ENCODE measurements at regions of chr5 and their contacts with region 1.

Region 1: DNA sequence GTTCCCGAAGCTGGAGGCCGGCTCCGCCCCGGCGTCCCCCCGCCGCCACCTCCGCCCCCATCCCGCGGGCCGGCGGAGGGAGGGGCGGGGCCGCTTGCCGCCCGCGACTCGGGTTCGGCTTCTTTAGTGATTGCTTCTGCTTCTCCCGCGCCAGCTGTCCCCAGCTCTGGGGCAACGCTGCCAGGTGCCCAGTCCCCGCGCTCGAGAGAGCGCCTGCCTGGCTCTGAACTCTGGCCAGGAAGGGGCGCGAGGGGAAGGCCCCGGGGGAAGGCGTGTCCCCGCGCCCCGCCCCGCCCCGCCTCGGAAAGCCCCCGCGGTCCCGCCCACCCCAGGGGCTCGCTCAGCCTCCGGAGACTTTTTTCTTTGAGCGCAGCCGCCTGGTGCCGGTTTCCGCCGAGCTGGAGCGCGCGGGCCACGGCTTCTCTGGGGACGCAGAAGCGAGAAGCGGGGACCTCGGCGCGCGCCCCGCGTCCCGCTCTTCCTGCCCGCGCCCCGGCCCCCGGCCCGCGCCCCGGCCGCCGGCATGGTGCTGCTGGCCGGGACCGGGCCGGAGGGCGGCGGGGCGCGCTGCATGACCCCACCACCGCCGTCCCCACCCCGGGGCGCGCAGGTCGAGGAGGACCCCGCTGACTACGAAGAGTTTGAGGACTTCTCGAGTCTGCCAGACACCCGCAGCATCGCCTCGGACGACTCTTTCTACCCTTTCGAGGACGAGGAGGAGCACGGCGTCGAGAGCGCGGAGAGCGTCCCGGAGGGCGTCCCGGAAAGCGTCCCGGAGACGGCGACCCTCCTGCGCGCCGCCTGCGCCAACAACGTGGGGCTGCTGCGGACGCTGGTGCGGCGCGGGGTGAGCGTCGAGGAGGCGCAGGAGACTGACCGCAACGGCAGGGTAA is at the start of gene ANKRD33B:
- DNase-seq: peak; percentile 72 to 73
- ATAC-seq: peak; percentile 67 to 78 (median 74)
- H3K4me3 ChIP-seq: peak within 1 kb of the TSS; percentile 50 to 87 (median 78)
- H3K27ac ChIP-seq: peak within 1 kb of the TSS; percentile 33 to 89 (median 84)
- H3K4me1 ChIP-seq: peaks cover 6 to 52% (median 41%) of the 10 kb centered on the region in 9 donors
- H3K27me3 ChIP-seq: peaks cover 0 to 35% (median 0%) of the 10 kb centered on the region in 7 donors
- CTCF ChIP-seq: no peak
- total RNA-seq, gene ANKRD33B: 1.9 to 33.0 (median 19.8) TPM

Region 2: DNA sequence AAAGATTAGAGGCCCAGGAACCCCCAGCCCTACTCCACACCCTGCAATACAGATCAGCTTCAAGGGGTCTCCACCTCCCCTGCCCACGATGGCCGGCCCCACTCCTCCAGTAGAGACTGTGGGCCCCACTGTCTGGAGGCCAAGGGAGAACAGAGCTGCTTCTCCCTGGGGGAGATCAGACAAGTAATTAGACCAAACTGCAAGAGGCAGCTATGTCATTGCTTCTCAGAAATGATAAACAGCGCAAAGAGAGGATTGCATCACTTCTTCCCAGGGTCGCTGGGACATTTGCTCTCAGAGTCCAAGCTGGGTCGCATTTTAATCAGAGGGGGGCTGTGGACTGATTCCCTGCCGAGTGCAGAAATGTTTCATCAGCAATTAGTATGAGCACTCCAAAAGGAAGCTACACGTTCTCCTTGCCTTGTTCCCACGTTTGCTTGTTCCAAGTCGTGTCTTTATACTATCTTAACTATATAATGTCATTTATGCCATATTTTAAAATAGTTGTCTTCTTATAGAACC is 62.6 kb before region 1 on chr5:
- intact Hi-C with region 1: no loop called
- DNase-seq: no peak
- ATAC-seq: no peak
- H3K4me3 ChIP-seq: no peak overlapping the region
- H3K27ac ChIP-seq: no peak overlapping the region
- H3K4me1 ChIP-seq: peaks cover 0 to 20% (median 16%) of the 10 kb centered on the region in 9 donors
- H3K27me3 ChIP-seq: no peaks in the 10 kb centered on the region
- CTCF ChIP-seq: no peak

Region 3: GRCh38 chr5:10601246-10602030 is 37.2 kb after region 1 on chr5:
- intact Hi-C with region 1: loop called in 2 of 10 experiments (anchors 5 kb)
- DNase-seq: peak; percentile 90 to 92
- ATAC-seq: peak; percentile 87 to 94 (median 92)
- H3K4me3 ChIP-seq: peak overlapping the region in 5 of 10 donors; percentile 0 to 18 (median 16)
- H3K27ac ChIP-seq: peak overlapping the region; percentile 39 to 89 (median 80)
- H3K4me1 ChIP-seq: peaks cover 13 to 44% (median 26%) of the 10 kb centered on the region in 9 donors
- H3K27me3 ChIP-seq: no peaks in the 10 kb centered on the region
- CTCF ChIP-seq: no peak

Region 4: GRCh38 chr5:10627160-10627701 is 63.0 kb after region 1 on chr5:
- intact Hi-C with region 1: loop called in 5 of 10 experiments (anchors 5 to 10 kb)
- DNase-seq: no peak
- ATAC-seq: peak in 5 of 8 donors; percentile 5 to 29 (median 17)
- H3K4me3 ChIP-seq: peak overlapping the region in 9 of 10 donors; percentile 6 to 37 (median 32)
- H3K27ac ChIP-seq: peak overlapping the region in 7 of 10 donors; percentile 3 to 69 (median 36)
- H3K4me1 ChIP-seq: peaks cover 9 to 48% (median 33%) of the 10 kb centered on the region in 9 donors
- H3K27me3 ChIP-seq: peaks cover 0 to 6% (median 0%) of the 10 kb centered on the region in 7 donors
- CTCF ChIP-seq: no peak

Region 5: GRCh38 chr5:12480487-12480886 is 1916.3 kb after region 1 on chr5:
- intact Hi-C with region 1: no loop called
- DNase-seq: no peak
- ATAC-seq: no peak
- H3K4me3 ChIP-seq: no peak overlapping the region
- H3K27ac ChIP-seq: no peak overlapping the region
- H3K4me1 ChIP-seq: no peaks in the 10 kb centered on the region
- H3K27me3 ChIP-seq: no peaks in the 10 kb centered on the region
- CTCF ChIP-seq: no peak

Measured in heart right ventricle (tissue), 16 donors.